A549 (cell line): ENCODE measurements at regions of chr2 and their contacts with region 1.

Region 1: DNA sequence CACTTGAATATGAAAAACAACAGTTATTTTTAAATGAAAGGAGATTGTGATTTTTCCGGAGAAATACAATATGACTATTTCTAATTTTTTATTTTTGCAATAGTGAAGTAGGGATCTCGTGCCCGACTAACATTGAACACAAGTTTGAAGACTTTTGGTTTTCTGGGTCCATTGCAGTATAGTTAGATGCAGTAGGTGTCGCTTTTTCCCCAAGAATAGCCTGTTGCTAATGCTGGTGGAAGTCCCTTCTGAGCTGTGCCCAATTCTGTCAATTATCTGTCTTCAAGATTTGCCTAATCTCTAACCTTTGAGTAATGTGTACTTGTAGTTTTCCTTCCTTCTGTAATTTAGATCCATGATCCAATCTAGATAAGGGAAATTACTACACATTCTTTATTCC is 36.5 kb downstream of the SEMA4F start:
- DNase-seq: peak; percentile 70 to 73
- ATAC-seq: peak; percentile 85 to 94
- H3K4me3 ChIP-seq: no peak overlapping the region
- H3K27ac ChIP-seq: no peak overlapping the region
- H3K4me1 ChIP-seq: no peaks in the 10 kb centered on the region; the same call in 2 of the 3 replicates
- CTCF ChIP-seq: peak; percentile 97
- EP300 ChIP-seq: no peak
- POLR2A ChIP-seq: no peak
- RAD21 ChIP-seq: peak; percentile 96 to 99

Region 2: DNA sequence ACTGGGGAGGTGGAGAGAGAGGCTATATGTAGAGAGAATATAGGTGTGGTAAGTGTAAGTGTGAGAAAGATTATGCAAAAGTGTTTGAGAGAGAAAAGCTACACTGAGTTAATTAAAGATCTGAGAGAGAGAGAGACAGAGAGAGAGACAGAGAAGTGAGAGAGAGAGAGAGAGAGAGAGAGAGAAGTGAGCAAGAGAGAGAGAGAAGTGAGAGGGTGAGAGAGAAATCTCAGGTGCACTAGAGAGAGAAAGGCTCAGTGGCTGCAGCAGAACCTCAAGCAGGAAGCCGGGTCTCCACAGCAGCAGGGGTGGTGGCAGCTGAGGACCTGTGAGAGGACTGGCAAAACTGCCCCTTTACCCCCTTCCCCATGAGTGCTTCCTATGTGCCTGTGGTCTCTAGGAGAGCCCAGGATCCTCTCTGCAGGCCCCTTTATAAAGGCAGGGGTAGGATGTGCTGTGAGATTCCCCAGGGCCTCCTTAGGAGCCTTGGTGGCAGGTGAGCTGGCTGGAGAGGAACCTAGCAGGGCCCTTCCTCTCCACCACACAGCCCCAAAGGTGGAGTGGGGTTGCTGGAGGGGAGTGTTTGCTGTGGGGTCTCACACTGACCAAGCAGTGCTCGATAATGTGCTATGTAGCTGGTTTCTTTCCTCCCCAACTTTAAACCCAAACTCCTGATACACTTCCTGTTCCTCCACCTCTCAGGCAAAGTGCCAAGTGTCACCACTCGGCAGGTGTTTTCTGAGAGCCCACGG is 399.9 kb before region 1 on chr2:
- CTCF ChIA-PET with region 1: no interaction called
- POLR2A ChIA-PET with region 1: no interaction called
- DNase-seq: no peak
- ATAC-seq: no peak; a peak in 1 of 6 replicates
- H3K4me3 ChIP-seq: no peak overlapping the region
- H3K27ac ChIP-seq: no peak overlapping the region
- H3K4me1 ChIP-seq: no peaks in the 10 kb centered on the region
- CTCF ChIP-seq: no peak
- EP300 ChIP-seq: no peak
- POLR2A ChIP-seq: no peak
- RAD21 ChIP-seq: no peak

Region 3: DNA sequence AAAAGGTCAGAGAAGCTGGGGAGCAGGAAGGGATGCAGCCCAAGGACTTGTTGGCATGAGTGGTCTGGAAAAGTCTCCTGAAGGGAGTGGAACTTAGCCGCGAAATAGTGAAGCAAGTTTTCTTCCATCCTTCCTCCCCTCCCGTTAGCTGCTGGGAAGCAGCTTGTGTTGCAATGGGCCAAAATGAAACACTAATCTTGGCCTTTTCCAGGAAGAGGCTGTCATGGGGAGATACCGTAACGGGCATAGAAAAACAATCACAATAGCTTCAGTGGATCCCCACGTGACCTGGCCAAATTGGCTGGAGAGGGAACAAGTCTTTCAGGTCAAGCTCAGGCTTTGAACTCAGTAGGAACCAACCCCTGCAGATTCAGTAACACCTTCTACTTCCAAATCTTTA is 12.8 kb after region 1 on chr2:
- CTCF ChIA-PET with region 1: interaction called, 17 read pairs
- POLR2A ChIA-PET with region 1: no interaction called
- DNase-seq: no peak
- ATAC-seq: no peak
- H3K4me3 ChIP-seq: no peak overlapping the region
- H3K27ac ChIP-seq: no peak overlapping the region
- H3K4me1 ChIP-seq: no peaks in the 10 kb centered on the region
- CTCF ChIP-seq: no peak
- EP300 ChIP-seq: no peak
- POLR2A ChIP-seq: no peak
- RAD21 ChIP-seq: no peak

Region 4: DNA sequence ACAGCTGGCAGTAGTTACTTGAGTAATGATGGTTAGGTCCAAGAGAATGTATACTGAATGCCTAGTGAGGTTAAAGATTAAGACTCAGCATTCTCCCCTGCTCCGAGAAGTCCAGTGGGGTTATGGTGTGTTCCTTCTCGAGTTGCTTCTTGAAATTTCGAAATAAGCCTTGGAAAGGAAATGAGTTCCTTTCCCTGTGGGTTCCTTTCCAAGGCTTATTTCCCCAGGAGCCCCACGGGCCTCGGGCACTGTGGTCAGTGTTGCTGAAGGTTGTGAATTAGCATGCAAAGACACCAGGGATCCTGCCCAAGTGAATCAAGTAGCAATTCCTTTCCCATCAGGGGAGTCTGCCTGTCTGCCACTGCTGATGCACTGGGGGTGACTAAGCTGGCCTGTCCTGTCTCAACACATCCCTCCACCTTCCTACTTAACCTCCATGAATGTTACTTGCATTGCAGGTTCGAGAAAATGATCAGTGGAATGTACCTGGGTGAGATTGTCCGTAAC is 196.9 kb after region 1 on chr2:
- CTCF ChIA-PET with region 1: interaction called, 25 read pairs
- POLR2A ChIA-PET with region 1: no interaction called
- DNase-seq: no peak
- ATAC-seq: peak in 1 of 2 experiments; percentile 22; a peak in 2 of 6 replicates
- H3K4me3 ChIP-seq: no peak overlapping the region
- H3K27ac ChIP-seq: no peak overlapping the region
- H3K4me1 ChIP-seq: peaks cover 11% of the 10 kb centered on the region; the same call in 2 of the 3 replicates
- CTCF ChIP-seq: no peak
- EP300 ChIP-seq: no peak
- POLR2A ChIP-seq: no peak
- RAD21 ChIP-seq: no peak